ENCODE measurements at regions of chr14 and their contacts with region 1.

Region 1: DNA sequence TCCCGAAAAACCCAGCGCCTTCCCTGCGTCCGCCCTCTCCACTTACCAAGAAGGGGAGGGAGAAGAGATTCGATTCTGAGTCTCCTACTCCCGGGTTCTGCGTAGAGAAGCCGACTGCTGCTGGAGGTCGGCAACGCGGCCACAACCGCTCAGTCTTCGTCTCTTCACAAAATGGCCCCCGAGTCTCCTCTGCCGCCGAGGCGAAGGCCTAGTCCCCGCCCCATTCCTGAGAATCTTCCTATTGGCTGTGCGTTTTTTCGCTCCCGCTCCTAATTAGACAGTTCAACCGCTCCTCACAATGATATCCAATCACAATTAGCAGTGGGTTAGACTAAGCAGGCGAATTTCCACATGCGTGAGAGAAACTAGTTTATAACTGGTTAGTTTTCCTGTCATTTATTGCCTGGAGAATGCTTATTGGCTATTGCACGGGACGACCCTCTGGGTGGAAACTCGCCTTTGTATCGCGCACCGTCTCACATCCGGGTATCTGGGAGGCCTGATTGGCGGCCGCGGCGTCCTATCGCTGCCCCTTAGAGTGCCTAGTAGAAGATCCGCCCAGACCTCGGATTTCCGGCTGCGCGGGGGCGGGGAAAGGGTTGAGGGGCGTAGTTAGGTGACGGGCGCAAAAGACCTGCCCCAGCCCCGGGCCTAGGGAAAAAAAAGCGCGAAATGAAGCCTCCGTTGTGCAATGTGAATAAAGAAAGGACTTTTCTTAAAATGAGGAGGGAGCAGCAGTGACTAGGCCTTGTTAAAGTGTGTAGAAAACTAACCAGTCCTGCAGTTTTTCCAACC is at the start of gene HNRNPC:
- DNase-seq: peak; percentile 100
- H3K4me3 ChIP-seq: peak within 1 kb of the TSS; percentile 92 to 99
- H3K4me3 Mint-ChIP-seq: peak within 1 kb of the TSS; percentile 92 to 100 (median 100)
- H3K27ac ChIP-seq: peak within 1 kb of the TSS; percentile 98
- H3K27ac Mint-ChIP-seq: peak within 1 kb of the TSS; percentile 96 to 100 (median 100)
- H3K4me1 ChIP-seq: peaks cover 48% of the 10 kb centered on the region
- H3K4me1 Mint-ChIP-seq: peaks cover 26 to 49% (median 35%) of the 10 kb centered on the region in 4 donors
- H3K27me3 ChIP-seq: no peaks in the 10 kb centered on the region
- H3K27me3 Mint-ChIP-seq: no peaks in the 10 kb centered on the region
- total RNA-seq, gene HNRNPC: 538 to 539 TPM

Region 2: GRCh38 chr14:20461274-20462001 is 808.0 kb before region 1 on chr14 and contains the start of gene PIP4P1:
- CTCF ChIA-PET with region 1: no interaction called
- POLR2A ChIA-PET with region 1: no interaction called
- intact Hi-C with region 1: loop called (anchors 10 kb)
- DNase-seq: peak; percentile 98 to 100 (median 99)
- H3K4me3 ChIP-seq: peak within 1 kb of the TSS; percentile 64 to 76
- H3K4me3 Mint-ChIP-seq: peak within 1 kb of the TSS; percentile 89 to 96 (median 92)
- H3K27ac ChIP-seq: peak within 1 kb of the TSS; percentile 86
- H3K27ac Mint-ChIP-seq: peak within 1 kb of the TSS; percentile 92 to 99 (median 97)
- H3K4me1 ChIP-seq: peaks cover 39% of the 10 kb centered on the region
- H3K4me1 Mint-ChIP-seq: peaks cover 19 to 35% (median 23%) of the 10 kb centered on the region in 4 donors
- H3K27me3 ChIP-seq: no peaks in the 10 kb centered on the region
- H3K27me3 Mint-ChIP-seq: no peaks in the 10 kb centered on the region
- total RNA-seq, gene PIP4P1: 77.8 to 78.1 TPM

Region 3: GRCh38 chr14:21071225-21072030 is 198.0 kb before region 1 on chr14:
- CTCF ChIA-PET with region 1: no interaction called
- POLR2A ChIA-PET with region 1: no interaction called
- intact Hi-C with region 1: no loop called
- DNase-seq: peak in 4 of 5 donors; percentile 23 to 75 (median 32)
- H3K4me3 ChIP-seq: peak overlapping the region in 1 of 2 donors; percentile 42
- H3K4me3 Mint-ChIP-seq: peak overlapping the region; percentile 80 to 90 (median 86)
- H3K27ac ChIP-seq: peak overlapping the region; percentile 25
- H3K27ac Mint-ChIP-seq: peak overlapping the region in 6 of 7 donors; percentile 77 to 88 (median 83)
- H3K4me1 ChIP-seq: peaks cover 35% of the 10 kb centered on the region
- H3K4me1 Mint-ChIP-seq: peaks cover 22 to 41% (median 30%) of the 10 kb centered on the region in 4 donors
- H3K27me3 ChIP-seq: peaks cover 52% of the 10 kb centered on the region
- H3K27me3 Mint-ChIP-seq: peaks cover 29 to 50% of the 10 kb centered on the region in 2 donors

Region 4: GRCh38 chr14:21215130-21215878 is 54.1 kb before region 1 on chr14:
- CTCF ChIA-PET with region 1: interaction called, 4 read pairs
- POLR2A ChIA-PET with region 1: interaction called, 4 read pairs
- intact Hi-C with region 1: loop called (anchors 10 kb)
- DNase-seq: no peak
- H3K4me3 ChIP-seq: no peak overlapping the region
- H3K4me3 Mint-ChIP-seq: peak overlapping the region; percentile 14 to 74 (median 58)
- H3K27ac ChIP-seq: peak overlapping the region; percentile 23
- H3K27ac Mint-ChIP-seq: peak overlapping the region; percentile 45 to 90 (median 71)
- H3K4me1 ChIP-seq: peaks cover 72% of the 10 kb centered on the region
- H3K4me1 Mint-ChIP-seq: peaks cover 38 to 77% (median 62%) of the 10 kb centered on the region in 4 donors
- H3K27me3 ChIP-seq: no peaks in the 10 kb centered on the region
- H3K27me3 Mint-ChIP-seq: no peaks in the 10 kb centered on the region

Region 5: GRCh38 chr14:21257394-21257909 is 12.0 kb before region 1 on chr14:
- CTCF ChIA-PET with region 1: interaction called, 13 read pairs
- POLR2A ChIA-PET with region 1: interaction called, 85 read pairs
- intact Hi-C with region 1: no loop called
- DNase-seq: no peak
- H3K4me3 ChIP-seq: peak overlapping the region in 1 of 2 donors; percentile 1
- H3K4me3 Mint-ChIP-seq: peak overlapping the region; percentile 69 to 82 (median 76)
- H3K27ac ChIP-seq: peak overlapping the region; percentile 27
- H3K27ac Mint-ChIP-seq: peak overlapping the region; percentile 14 to 90 (median 78)
- H3K4me1 ChIP-seq: peaks cover 89% of the 10 kb centered on the region
- H3K4me1 Mint-ChIP-seq: peaks cover 56 to 91% (median 73%) of the 10 kb centered on the region in 4 donors
- H3K27me3 ChIP-seq: no peaks in the 10 kb centered on the region
- H3K27me3 Mint-ChIP-seq: no peaks in the 10 kb centered on the region

Region 6: DNA sequence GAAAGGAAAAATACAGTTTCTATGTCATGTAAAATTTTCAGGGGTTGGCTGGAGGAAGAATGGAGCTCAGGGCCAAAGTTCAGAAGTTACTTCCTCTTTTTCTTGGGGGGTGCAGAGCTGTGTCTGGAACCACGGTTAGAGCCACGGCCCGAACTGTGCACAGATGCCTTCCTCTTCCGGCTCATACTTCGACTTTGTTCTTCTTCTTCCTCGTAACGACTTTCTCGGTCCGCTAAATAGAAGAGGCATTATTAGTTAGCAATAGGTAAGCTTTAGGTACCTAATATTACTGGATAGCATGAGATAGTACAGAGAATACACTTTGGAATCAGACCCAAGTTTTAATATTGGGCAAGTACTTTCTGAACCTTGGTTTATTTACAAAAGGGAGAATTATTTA is 83.1 kb after region 1 on chr14:
- CTCF ChIA-PET with region 1: no interaction called
- POLR2A ChIA-PET with region 1: no interaction called
- intact Hi-C with region 1: no loop called
- DNase-seq: no peak
- H3K4me3 ChIP-seq: no peak overlapping the region
- H3K4me3 Mint-ChIP-seq: no peak overlapping the region
- H3K27ac ChIP-seq: no peak overlapping the region
- H3K27ac Mint-ChIP-seq: peak overlapping the region in 3 of 7 donors; percentile 7 to 85 (median 75)
- H3K4me1 ChIP-seq: no peaks in the 10 kb centered on the region
- H3K4me1 Mint-ChIP-seq: no peaks in the 10 kb centered on the region
- H3K27me3 ChIP-seq: no peaks in the 10 kb centered on the region
- H3K27me3 Mint-ChIP-seq: no peaks in the 10 kb centered on the region

Region 7: GRCh38 chr14:21383848-21384493 is 114.5 kb after region 1 on chr14 and contains the start of gene SUPT16H:
- CTCF ChIA-PET with region 1: interaction called, 3 read pairs
- POLR2A ChIA-PET with region 1: interaction called, 13 read pairs
- intact Hi-C with region 1: loop called (anchors 1 kb)
- DNase-seq: peak; percentile 91 to 96 (median 93)
- H3K4me3 ChIP-seq: peak within 1 kb of the TSS; percentile 98 to 99
- H3K4me3 Mint-ChIP-seq: peak within 1 kb of the TSS; percentile 95 to 100 (median 97)
- H3K27ac ChIP-seq: peak within 1 kb of the TSS; percentile 82
- H3K27ac Mint-ChIP-seq: peak within 1 kb of the TSS; percentile 96 to 100 (median 99)
- H3K4me1 ChIP-seq: peaks cover 47% of the 10 kb centered on the region
- H3K4me1 Mint-ChIP-seq: peaks cover 25 to 53% (median 38%) of the 10 kb centered on the region in 4 donors
- H3K27me3 ChIP-seq: no peaks in the 10 kb centered on the region
- H3K27me3 Mint-ChIP-seq: no peaks in the 10 kb centered on the region
- total RNA-seq, gene SUPT16H: 84.5 to 87.2 TPM

Region 8: DNA sequence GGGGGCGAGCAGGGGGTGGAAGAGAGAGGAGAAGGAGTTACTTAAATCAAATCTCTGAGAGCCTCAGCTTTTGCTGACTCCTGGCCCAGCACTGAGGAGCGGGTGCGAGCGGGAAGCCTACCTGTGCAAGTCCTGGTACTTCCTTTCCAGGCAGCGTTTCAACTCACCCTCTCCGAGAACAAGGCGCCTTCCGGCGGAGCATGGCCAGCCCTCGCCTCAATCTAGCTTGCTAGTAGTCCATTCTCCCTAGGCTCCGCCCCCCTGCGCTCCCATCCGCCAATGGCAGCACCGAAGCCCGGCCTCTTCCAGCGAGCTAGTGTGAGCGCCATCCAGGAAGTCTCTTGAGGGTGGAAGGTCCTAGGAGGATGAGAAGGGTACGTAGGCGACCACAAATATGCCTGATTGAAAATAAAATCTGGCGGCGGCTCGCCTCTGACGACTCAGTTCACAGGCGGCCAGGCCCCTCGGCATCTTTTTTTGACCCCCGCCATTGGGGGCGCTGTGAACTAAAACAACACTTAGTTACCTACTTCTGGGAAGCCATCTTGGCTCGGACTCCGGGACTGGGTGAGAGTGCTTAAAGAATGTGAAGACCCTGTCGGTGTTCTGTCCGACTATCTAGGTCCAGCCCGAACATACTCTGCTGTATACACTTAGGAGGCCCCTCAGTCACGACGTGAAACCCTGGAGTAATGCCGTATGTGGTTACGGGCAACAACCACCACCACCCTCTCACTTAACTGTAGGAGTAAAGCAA is 186.6 kb after region 1 on chr14 and contains the start of gene CHD8:
- CTCF ChIA-PET with region 1: interaction called, 4 read pairs
- POLR2A ChIA-PET with region 1: interaction called, 3 read pairs
- intact Hi-C with region 1: loop called (anchors 1 kb)
- DNase-seq: peak; percentile 99 to 100 (median 100)
- H3K4me3 ChIP-seq: peak within 1 kb of the TSS; percentile 75 to 77
- H3K4me3 Mint-ChIP-seq: peak within 1 kb of the TSS; percentile 93 to 99 (median 96)
- H3K27ac ChIP-seq: peak within 1 kb of the TSS; percentile 88
- H3K27ac Mint-ChIP-seq: peak within 1 kb of the TSS; percentile 94 to 100 (median 99)
- H3K4me1 ChIP-seq: peaks cover 47% of the 10 kb centered on the region
- H3K4me1 Mint-ChIP-seq: peaks cover 23 to 46% (median 34%) of the 10 kb centered on the region in 4 donors
- H3K27me3 ChIP-seq: no peaks in the 10 kb centered on the region
- H3K27me3 Mint-ChIP-seq: no peaks in the 10 kb centered on the region
- total RNA-seq, gene CHD8: 131 to 132 TPM

Region 9: GRCh38 chr14:21510735-21511657 is 241.5 kb after region 1 on chr14 and contains the start of gene METTL3:
- CTCF ChIA-PET with region 1: no interaction called
- POLR2A ChIA-PET with region 1: interaction called, 6 read pairs
- intact Hi-C with region 1: loop called (anchors 1 kb)
- DNase-seq: peak; percentile 91 to 97 (median 92)
- H3K4me3 ChIP-seq: peak within 1 kb of the TSS; percentile 93 to 100
- H3K4me3 Mint-ChIP-seq: peak within 1 kb of the TSS; percentile 97 to 100 (median 98)
- H3K27ac ChIP-seq: peak within 1 kb of the TSS; percentile 88
- H3K27ac Mint-ChIP-seq: peak within 1 kb of the TSS; percentile 94 to 100 (median 99)
- H3K4me1 ChIP-seq: peaks cover 38% of the 10 kb centered on the region
- H3K4me1 Mint-ChIP-seq: peaks cover 27 to 51% (median 37%) of the 10 kb centered on the region in 4 donors
- H3K27me3 ChIP-seq: no peaks in the 10 kb centered on the region
- H3K27me3 Mint-ChIP-seq: no peaks in the 10 kb centered on the region
- total RNA-seq, gene METTL3: 93.4 to 98.9 TPM

Measured in CD4-positive, alpha-beta memory T cell (primary cell).